Activated CD4-positive, alpha-beta T cell treated with anti-CD3 and anti-CD28 coated beads, Interleukin-2, amount 10 ng/mL, durations not matched to agents 24 days and 14 days (primary cell): ENCODE measurements at regions of chr1 and their contacts with region 1.

Region 1: DNA sequence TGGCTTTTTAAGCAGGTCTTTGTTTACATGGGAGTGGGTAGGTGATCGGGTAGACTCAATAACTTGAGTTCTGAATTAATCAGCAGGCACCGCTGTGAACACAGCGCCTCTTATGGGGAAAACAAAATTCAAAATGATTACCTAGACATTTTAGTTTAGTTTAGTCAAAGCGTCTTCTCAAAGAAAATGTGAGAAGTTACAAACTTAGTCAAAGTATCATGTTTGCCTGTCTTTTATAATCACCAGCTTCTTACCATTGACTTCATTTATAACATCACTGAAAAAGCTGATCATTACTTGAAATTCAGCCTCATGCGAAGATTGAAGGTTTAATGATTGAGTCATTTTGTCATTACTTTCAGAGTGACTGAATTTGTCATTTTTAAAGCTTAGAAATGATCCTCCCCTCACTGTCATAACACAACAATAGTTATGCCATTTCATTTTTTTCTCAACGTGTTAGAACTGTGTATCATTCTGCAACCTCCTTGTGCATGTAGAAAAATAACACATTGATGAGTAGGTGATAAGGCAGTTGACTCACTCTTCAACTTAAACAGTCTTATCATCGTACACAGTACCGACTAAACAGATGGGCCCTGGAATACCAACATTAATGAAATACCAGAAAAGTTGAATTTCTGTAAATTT is 188.5 kb downstream of the NFIA start:
- DNase-seq: no peak
- H3K4me3 Mint-ChIP-seq: no peak overlapping the region
- H3K27ac Mint-ChIP-seq: peak overlapping the region; percentile 57
- H3K4me1 Mint-ChIP-seq: no peaks in the 10 kb centered on the region
- H3K27me3 Mint-ChIP-seq: peaks cover 8% of the 10 kb centered on the region

Region 2: GRCh38 chr1:61160526-61160925 is 110.4 kb before region 1 on chr1:
- intact Hi-C with region 1: no loop called
- DNase-seq: no peak
- H3K4me3 Mint-ChIP-seq: no peak overlapping the region
- H3K27ac Mint-ChIP-seq: no peak overlapping the region
- H3K4me1 Mint-ChIP-seq: peaks cover 5% of the 10 kb centered on the region
- H3K27me3 Mint-ChIP-seq: peaks cover 27% of the 10 kb centered on the region

Region 3: DNA sequence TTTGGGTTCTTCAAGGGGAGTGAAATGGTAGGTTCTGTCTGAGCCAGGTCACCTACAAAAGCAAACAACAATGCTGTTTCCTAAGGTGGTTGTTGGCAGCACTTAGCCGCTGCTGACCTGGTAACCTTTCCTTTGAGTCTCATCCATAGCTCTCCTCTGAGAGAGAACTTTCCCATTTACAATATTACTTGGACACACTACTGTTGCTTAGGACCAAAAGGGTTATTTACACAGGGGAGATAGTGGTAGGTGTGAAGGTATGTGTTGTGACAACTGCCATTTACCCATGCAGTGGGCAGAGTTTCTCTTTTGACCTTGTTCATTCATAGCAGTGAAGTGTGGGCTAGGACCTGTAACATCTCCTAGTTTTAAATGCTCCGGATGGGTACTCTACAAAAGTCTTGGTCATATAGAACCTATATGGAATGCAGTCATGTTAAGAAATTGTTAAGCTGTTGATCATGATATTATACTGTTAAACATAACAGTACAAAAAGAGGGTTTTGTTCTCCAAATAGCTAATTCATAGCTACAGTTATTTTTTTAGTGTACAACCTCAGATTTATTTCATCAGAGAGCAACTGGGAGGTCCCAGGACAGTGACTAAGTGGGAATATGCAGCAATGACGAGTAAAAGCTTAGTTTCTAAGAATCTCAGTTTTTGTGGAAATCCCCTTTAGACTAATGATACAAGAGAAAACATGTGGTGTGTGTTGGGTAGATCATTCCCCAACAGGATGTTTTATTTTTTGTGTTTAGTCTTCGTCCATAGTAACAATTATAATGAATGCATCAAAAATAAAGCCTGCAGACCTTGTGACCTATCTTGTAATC is 31.2 kb after region 1 on chr1:
- intact Hi-C with region 1: loop called (anchors 1 kb)
- DNase-seq: peak; percentile 67
- H3K4me3 Mint-ChIP-seq: peak overlapping the region; percentile 36
- H3K27ac Mint-ChIP-seq: peak overlapping the region; percentile 87
- H3K4me1 Mint-ChIP-seq: peaks cover 26% of the 10 kb centered on the region
- H3K27me3 Mint-ChIP-seq: peaks cover 4% of the 10 kb centered on the region

Region 4: GRCh38 chr1:61323681-61324328 is 52.9 kb after region 1 on chr1:
- intact Hi-C with region 1: no loop called
- DNase-seq: no peak
- H3K4me3 Mint-ChIP-seq: no peak overlapping the region
- H3K27ac Mint-ChIP-seq: no peak overlapping the region
- H3K4me1 Mint-ChIP-seq: peaks cover 36% of the 10 kb centered on the region
- H3K27me3 Mint-ChIP-seq: peaks cover 4% of the 10 kb centered on the region